ENCODE measurements at regions of chr3 and their contacts with region 1.

Region 1: DNA sequence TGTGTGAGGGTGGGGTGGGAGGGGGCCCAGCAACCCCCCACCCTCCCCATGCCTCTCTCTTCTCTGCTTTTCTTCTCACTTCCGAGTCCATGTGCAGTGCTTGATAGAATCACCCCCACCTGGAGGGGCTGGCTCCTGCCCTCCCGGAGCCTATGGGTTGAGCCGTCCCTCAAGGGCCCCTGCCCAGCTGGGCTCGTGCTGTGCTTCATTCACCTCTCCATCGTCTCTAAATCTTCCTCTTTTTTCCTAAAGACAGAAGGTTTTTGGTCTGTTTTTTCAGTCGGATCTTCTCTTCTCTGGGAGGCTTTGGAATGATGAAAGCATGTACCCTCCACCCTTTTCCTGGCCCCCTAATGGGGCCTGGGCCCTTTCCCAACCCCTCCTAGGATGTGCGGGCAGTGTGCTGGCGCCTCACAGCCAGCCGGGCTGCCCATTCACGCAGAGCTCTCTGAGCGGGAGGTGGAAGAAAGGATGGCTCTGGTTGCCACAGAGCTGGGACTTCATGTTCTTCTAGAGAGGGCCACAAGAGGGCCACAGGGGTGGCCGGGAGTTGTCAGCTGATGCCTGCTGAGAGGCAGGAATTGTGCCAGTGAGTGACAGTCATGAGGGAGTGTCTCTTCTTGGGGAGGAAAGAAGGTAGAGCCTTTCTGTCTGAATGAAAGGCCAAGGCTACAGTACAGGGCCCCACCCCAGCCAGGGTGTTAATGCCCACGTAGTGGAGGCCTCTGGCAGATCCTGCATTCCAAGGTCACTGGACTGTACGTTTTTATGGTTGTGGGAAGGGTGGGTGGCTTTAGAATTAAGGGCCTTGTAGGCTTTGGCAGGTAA is 8.1 kb downstream of the FAM131A start:
- DNase-seq: peak in 1 of 2 experiments; percentile 64
- H3K4me3 ChIP-seq: no peak overlapping the region
- H3K27ac ChIP-seq: no peak overlapping the region
- H3K4me1 ChIP-seq: peaks cover 0 to 10% (median 7%) of the 10 kb centered on the region in 4 experiments; a peak in 6 of 7 replicates
- H3K27me3 ChIP-seq: no peaks in the 10 kb centered on the region
- CTCF ChIP-seq: peak in 2 of 3 experiments; percentile 63 to 78; a peak in 3 of 4 replicates
- EP300 ChIP-seq: 0 out of 3 replicates have a peak, but pooled peaks of 1 of the 2 experiments have one; percentile 38
- POLR2A ChIP-seq: no peak
- RAD21 ChIP-seq: peak; percentile 28 to 53; a peak in 3 of 4 replicates

Region 2: DNA sequence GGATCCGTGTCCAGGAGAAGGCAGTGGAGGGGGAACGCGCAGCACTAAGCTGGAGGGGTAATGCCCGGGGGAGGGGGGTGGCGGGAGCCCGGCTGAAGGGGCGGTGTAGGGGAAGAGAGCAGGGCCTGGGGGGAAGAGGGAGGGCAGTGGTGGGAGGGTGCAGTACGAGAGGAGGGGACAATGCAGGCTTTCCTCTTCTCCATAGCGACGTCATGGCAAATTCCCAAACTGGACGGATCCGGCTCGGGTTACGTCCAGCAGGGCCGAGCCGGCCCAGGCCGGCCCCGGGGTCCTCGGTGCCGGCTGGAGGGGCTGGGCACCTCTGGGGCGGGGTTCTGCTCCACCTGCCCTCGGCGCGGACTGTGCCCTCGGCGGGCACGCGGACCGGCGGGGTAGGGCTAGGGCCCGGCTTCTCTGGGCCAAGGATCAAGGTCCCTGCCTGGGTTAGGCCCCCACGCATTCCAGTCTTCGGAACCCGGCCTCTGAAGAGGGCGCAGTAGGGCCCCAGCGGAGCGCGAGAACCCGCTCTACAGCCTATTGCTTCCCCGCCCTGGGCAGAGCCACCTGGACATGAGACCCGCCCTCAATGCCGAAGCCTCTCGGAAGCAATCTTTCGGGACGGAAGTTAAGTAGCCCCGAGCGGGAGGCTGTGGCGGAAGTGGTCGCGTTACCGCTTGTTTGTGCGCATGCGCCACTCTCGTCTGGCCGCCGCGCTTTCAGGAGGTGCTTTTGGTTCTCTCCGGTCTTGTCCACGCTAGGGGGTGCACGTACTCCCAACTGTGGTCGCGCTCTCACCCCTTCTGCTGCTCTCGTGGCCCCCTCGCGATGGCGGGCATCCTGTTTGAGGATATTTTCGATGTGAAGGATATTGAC is 17.4 kb after region 1 on chr3:
- CTCF ChIA-PET with region 1: interaction called, 21 read pairs
- POLR2A ChIA-PET with region 1: interaction called, 15 read pairs
- DNase-seq: peak; percentile 93 to 95
- H3K4me3 ChIP-seq: peak overlapping the region; percentile 77 to 88 (median 80)
- H3K27ac ChIP-seq: peak overlapping the region; percentile 92
- H3K4me1 ChIP-seq: peaks cover 3 to 18% (median 12%) of the 10 kb centered on the region in 4 experiments
- H3K27me3 ChIP-seq: peaks cover 0 to 8% (median 3%) of the 10 kb centered on the region in 4 experiments; a peak in 3 of 7 replicates
- CTCF ChIP-seq: peak in 2 of 3 experiments; percentile 57 to 65; a peak in 3 of 4 replicates
- EP300 ChIP-seq: no peak; a peak in 1 of 3 replicates
- POLR2A ChIP-seq: peak in 1 of 2 experiments; percentile 86; a peak in 2 of 3 replicates
- RAD21 ChIP-seq: peak; percentile 11 to 30; a peak in 2 of 4 replicates

Region 3: DNA sequence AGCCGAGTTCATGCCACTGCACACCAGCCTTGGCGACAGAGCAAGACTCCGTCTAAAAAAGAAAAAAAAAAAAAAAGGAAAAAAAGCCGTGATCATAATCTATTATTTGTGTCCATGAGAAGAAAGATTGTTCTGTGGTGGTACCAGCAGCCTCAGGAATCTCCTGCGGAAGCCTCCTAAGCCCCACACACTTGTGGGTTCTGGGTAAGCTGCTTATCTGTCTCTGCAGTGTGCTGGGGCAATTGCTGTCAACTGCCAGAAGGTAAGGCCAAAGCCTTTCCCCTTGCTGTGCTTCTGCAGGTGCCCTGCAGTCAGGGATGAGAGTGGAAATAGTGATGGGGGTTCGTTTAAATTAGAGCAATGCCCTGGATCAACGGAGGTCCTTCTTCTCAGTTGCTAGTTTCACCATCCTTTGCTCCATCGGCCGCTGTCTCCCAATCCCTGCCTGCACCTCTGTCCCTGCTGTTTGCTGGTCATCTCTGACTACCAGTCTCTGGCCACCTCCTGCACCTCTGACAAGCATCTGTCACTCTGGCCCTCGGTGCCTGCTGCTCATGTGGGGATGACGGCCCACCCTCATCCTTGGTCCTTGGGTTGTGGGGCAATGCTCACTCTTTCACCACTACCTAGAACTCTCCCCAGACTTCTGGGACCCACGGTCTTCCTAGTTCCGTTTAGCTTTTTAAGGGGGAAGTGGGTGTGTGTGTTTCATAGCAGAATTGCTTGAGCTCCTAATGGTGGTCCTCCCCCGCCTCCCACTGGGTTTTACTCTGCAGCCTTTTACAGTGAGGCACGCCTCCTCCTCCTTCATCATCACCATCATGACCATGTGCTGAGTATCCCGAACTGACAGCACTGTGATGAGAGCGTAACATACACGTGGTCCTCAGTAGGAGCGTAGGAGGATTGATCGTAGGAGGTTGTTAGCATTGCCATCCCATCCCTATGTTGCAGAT is 59.8 kb after region 1 on chr3:
- CTCF ChIA-PET with region 1: no interaction called
- POLR2A ChIA-PET with region 1: no interaction called
- DNase-seq: no peak
- H3K4me3 ChIP-seq: no peak overlapping the region
- H3K27ac ChIP-seq: no peak overlapping the region
- H3K4me1 ChIP-seq: no peaks in the 10 kb centered on the region
- H3K27me3 ChIP-seq: peaks cover 0 to 2% (median 0%) of the 10 kb centered on the region in 4 experiments; a peak in 1 of 7 replicates
- CTCF ChIP-seq: no peak
- EP300 ChIP-seq: no peak
- POLR2A ChIP-seq: no peak
- RAD21 ChIP-seq: no peak

Measured in H1 (cell line).